ENCODE measurements at regions of chr14 and their contacts with region 1.

Region 1: DNA sequence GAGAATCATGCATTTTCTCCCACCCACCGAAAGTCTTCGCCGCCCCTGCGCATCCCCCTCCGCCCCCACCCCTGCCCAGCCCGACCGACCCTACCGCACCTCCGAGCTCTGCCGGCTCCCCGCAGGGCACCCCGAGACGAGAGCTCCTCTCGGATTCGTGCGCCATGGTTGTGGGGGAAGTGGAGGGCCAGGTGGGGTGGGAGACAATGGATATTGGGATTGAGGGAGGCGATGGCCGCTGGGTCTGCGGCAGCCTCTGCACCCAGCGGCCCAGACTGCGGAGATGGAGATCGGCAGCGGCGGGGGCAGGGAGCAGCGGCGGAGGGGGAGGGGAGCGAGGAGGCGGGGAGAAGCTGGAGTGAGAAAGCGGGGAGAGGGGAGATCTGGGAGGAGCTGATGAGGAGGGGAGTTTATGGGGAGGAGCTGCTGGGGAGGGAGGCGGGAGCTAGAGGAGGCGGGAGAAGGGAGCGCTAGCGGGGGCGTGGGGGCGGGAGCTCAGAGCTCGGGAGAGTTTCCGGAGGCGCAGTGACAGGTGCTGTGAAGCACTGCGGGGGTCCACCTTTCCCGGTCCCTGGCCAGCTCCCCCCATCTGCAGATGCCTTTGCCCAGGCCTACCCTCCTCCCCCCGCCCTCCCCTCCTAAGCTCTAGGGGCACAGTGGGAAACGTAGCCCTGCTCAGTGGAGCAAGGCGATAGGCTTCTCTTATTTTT is at the start of gene SALL2:
- DNase-seq: peak; percentile 79
- ATAC-seq: peak; percentile 84
- H3K4me3 ChIP-seq: peak within 1 kb of the TSS; percentile 77 to 83 (median 78)
- H3K27ac ChIP-seq: peak within 1 kb of the TSS; percentile 69
- H3K4me1 ChIP-seq: peaks cover 40% of the 10 kb centered on the region
- H3K27me3 ChIP-seq: no peaks in the 10 kb centered on the region
- CTCF ChIP-seq: no peak
- EP300 ChIP-seq: no peak
- POLR2A ChIP-seq: peak in 1 of 2 experiments; percentile 93; a peak in 2 of 4 replicates
- RAD21 ChIP-seq: no peak
- total RNA-seq, gene SALL2: 4.9 and 7.6 TPM in 2 replicates

Region 2: GRCh38 chr14:21437063-21437901 is 88.8 kb before region 1 on chr14:
- CTCF ChIA-PET with region 1: no interaction called
- POLR2A ChIA-PET with region 1: interaction called, 13 read pairs
- in situ Hi-C with region 1: no loop called
- intact Hi-C with region 1: no loop called
- DNase-seq: peak; percentile 100
- ATAC-seq: peak; percentile 97
- H3K4me3 ChIP-seq: peak overlapping the region; percentile 85 to 96 (median 87)
- H3K27ac ChIP-seq: peak overlapping the region; percentile 92
- H3K4me1 ChIP-seq: peaks cover 46% of the 10 kb centered on the region
- H3K27me3 ChIP-seq: peaks cover 0 to 4% of the 10 kb centered on the region in 2 experiments; a peak in 1 of 5 replicates
- CTCF ChIP-seq: no peak; the same call in 1 of the 2 replicates
- EP300 ChIP-seq: 0 out of 4 replicates have a peak, but pooled peaks of 1 of the 2 experiments have one; percentile 30
- POLR2A ChIP-seq: peak; percentile 71 to 79
- RAD21 ChIP-seq: peak; percentile 61

Region 3: GRCh38 chr14:21498553-21499526 is 27.3 kb before region 1 on chr14:
- CTCF ChIA-PET with region 1: no interaction called
- POLR2A ChIA-PET with region 1: interaction called, 13 read pairs
- in situ Hi-C with region 1: no loop called
- intact Hi-C with region 1: no loop called
- DNase-seq: peak; percentile 77
- ATAC-seq: peak; percentile 78
- H3K4me3 ChIP-seq: no peak overlapping the region
- H3K27ac ChIP-seq: peak overlapping the region; percentile 41
- H3K4me1 ChIP-seq: no peaks in the 10 kb centered on the region
- H3K27me3 ChIP-seq: no peaks in the 10 kb centered on the region
- CTCF ChIP-seq: peak; percentile 79
- EP300 ChIP-seq: no peak
- POLR2A ChIP-seq: 0 out of 4 replicates have a peak, but pooled peaks of 1 of the 2 experiments have one; percentile 18
- RAD21 ChIP-seq: peak; percentile 82

Region 4: DNA sequence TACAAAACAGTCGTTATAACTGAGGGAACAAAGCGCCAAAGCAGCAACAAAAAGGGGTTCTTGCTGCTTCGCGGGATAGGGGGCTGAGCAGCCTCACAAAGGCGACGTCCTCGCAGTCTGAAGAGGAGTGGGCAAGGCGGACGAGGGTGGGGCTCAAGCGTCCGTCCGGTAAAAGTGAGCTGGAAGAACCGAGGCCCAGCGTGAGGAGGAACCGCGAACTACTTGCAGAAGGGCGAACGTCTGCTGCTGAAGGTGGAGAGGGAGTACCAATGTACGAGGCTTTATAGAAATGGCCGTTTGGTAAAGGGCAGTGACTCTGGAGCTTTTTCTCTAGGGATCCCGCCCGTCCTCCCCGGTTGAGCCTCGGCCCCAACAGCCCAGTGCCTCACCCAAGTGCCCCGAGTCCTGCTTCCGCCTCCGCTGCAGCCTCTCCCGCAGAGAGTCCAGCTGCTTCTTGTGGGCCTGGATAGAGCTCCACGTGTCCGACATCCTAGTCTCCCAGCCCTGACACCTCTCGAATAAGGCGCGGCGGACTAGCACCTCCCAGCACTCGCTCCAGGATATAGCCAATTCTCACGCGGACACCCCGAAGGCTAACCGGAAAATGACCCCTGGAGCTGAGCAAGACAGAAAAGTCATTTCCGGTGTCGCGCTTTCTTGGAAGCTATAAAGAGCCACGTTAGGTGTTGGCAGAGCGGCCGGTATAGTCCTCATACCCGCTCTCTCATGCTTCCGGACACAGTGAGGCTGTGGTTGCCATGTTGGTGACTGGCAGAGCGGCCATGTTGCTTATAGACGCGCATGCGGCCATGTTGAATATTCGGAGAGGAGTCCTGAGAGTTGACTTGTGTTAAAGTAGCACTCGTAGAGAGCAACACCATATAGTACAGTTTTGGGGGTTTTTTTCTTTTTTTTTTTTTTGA is 15.1 kb before region 1 on chr14 and contains the start of gene METTL3:
- CTCF ChIA-PET with region 1: no interaction called
- POLR2A ChIA-PET with region 1: interaction called, 173 read pairs
- in situ Hi-C with region 1: no loop called
- intact Hi-C with region 1: loop called (anchors 1 kb)
- DNase-seq: peak; percentile 100
- ATAC-seq: peak; percentile 97
- H3K4me3 ChIP-seq: peak within 1 kb of the TSS; percentile 84 to 97 (median 87)
- H3K27ac ChIP-seq: peak within 1 kb of the TSS; percentile 80
- H3K4me1 ChIP-seq: peaks cover 53% of the 10 kb centered on the region
- H3K27me3 ChIP-seq: no peaks in the 10 kb centered on the region; a peak in 1 of 5 replicates
- CTCF ChIP-seq: peak; percentile 53
- EP300 ChIP-seq: 0 out of 4 replicates have a peak, but pooled peaks of 1 of the 2 experiments have one; percentile 1
- POLR2A ChIP-seq: peak; percentile 97
- RAD21 ChIP-seq: peak; percentile 10; the same call in 1 of the 2 replicates
- total RNA-seq, gene METTL3: 114 and 123 TPM in 2 replicates

Region 5: GRCh38 chr14:21536418-21537089 is 10.4 kb after region 1 on chr14:
- CTCF ChIA-PET with region 1: no interaction called
- POLR2A ChIA-PET with region 1: interaction called, 26 read pairs
- in situ Hi-C with region 1: no loop called
- intact Hi-C with region 1: no loop called
- DNase-seq: no peak
- ATAC-seq: peak; percentile 70
- H3K4me3 ChIP-seq: peak overlapping the region; percentile 52 to 76 (median 57)
- H3K27ac ChIP-seq: no peak overlapping the region
- H3K4me1 ChIP-seq: peaks cover 28% of the 10 kb centered on the region
- H3K27me3 ChIP-seq: peaks cover 1 to 26% of the 10 kb centered on the region in 2 experiments; a peak in 3 of 5 replicates
- CTCF ChIP-seq: no peak; the same call in 1 of the 2 replicates
- EP300 ChIP-seq: no peak
- POLR2A ChIP-seq: no peak
- RAD21 ChIP-seq: no peak